ENCODE measurements at regions of chr12 and their contacts with region 1.

Region 1: DNA sequence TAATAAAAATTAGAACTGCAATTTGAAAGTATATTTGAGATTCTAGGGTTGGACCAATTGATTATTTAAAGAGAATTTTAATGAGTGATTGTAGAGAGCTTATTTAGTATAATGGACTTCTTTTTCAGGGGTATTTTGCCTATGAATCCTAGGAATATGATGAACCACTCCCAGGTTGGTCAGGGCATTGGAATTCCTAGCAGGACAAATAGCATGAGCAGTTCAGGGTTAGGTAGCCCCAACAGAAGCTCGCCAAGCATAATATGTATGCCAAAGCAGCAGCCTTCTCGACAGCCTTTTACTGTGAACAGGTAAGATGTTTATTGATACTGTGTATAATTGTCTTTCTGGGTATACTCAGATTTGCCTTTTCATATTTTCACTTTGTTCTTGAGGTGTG is 35.9 kb upstream of the KCNMB4 start:
- DNase-seq: no peak
- ATAC-seq: no peak
- H3K4me3 ChIP-seq: no peak overlapping the region
- H3K4me3 Mint-ChIP-seq: no peak overlapping the region
- H3K27ac ChIP-seq: no peak overlapping the region
- H3K27ac Mint-ChIP-seq: no peak overlapping the region
- H3K4me1 ChIP-seq: no peaks in the 10 kb centered on the region
- H3K4me1 Mint-ChIP-seq: peaks cover 3 to 61% (median 54%) of the 10 kb centered on the region in 7 donors
- H3K27me3 ChIP-seq: no peaks in the 10 kb centered on the region
- H3K27me3 Mint-ChIP-seq: no peaks in the 10 kb centered on the region

Region 2: DNA sequence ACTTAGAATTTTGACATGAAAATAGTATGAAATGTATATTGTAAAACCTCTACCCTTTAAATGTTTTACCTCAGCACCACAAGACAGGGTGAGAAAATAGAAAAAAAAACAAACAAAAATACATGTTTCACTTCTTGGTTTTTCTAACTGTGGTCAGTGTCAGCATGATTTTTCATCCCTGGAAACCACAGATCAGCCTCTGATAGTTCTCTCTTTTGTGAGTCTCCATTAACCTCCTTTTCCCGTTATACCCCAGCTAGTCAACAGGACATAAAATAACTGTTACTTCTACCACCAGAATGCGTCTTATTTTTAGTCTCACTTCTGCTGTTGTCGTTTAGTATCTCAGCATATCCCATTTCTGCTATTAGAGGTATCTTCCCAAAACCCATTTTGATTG is 12.4 kb before region 1 on chr12:
- CTCF ChIA-PET with region 1: no interaction called
- POLR2A ChIA-PET with region 1: no interaction called
- intact Hi-C with region 1: loop called in 1 of 2 experiments (anchors 2 kb)
- DNase-seq: no peak
- ATAC-seq: peak; percentile 69
- H3K4me3 ChIP-seq: no peak overlapping the region
- H3K4me3 Mint-ChIP-seq: peak overlapping the region in 3 of 10 donors; percentile 4 to 10 (median 6)
- H3K27ac ChIP-seq: no peak overlapping the region
- H3K27ac Mint-ChIP-seq: peak overlapping the region in 3 of 9 donors; percentile 22 to 36 (median 27)
- H3K4me1 ChIP-seq: peaks cover 0 to 5% of the 10 kb centered on the region in 2 donors
- H3K4me1 Mint-ChIP-seq: peaks cover 26 to 75% (median 61%) of the 10 kb centered on the region in 7 donors
- H3K27me3 ChIP-seq: no peaks in the 10 kb centered on the region
- H3K27me3 Mint-ChIP-seq: no peaks in the 10 kb centered on the region

Measured in naive thymus-derived CD4-positive, alpha-beta T cell (primary cell).